ENCODE measurements at regions of chr2 and their contacts with region 1.

Region 1: DNA sequence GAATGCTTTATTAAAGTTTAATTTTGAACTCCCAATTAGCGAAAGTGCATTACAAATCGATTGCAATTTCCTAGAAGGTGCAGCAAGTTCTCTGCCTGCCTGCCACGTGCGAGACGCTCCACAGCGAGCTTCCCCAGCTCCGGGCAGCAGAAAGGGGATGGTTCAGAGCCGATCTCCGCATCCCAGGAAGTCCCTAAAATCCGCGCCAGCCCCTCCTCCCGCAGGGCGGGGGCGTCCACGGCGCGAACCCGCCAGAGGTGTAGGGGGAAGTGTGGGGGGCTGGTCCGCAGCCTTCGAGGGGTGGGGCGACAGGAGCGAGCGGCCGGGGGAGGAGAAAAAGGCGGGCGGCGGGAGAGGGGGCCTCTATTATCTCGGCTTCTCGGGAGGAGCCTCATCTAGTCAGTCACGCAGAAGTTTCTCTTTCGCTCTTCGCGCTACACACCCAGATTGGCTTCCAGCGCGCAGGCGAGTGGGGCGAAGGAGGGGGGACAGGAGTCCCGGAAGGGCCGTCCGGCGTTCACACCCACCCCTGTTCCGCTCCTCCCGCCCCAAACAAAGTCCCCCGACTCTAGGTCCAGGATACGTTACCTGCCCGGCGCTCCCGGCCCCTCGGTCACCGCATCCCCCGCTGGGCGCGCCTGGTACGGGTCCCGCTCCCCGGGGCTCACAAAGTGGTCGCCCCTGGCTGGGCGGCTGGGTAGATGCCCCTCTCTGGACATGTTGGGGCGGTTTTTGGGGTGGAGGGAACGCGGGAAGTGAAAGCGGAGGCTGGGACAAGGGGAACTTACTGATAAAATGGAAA is 9.1 kb upstream of the NR4A2 start:
- DNase-seq: peak; percentile 94
- H3K4me3 Mint-ChIP-seq: peak overlapping the region; percentile 84
- H3K27ac Mint-ChIP-seq: peak overlapping the region; percentile 96
- H3K4me1 Mint-ChIP-seq: peaks cover 50% of the 10 kb centered on the region
- H3K27me3 Mint-ChIP-seq: no peaks in the 10 kb centered on the region

Region 2: GRCh38 chr2:156199588-156199987 is 142.1 kb before region 1 on chr2:
- CTCF ChIA-PET with region 1: no interaction called
- intact Hi-C with region 1: no loop called
- DNase-seq: no peak
- H3K4me3 Mint-ChIP-seq: no peak overlapping the region
- H3K27ac Mint-ChIP-seq: no peak overlapping the region
- H3K4me1 Mint-ChIP-seq: no peaks in the 10 kb centered on the region
- H3K27me3 Mint-ChIP-seq: peaks cover 14% of the 10 kb centered on the region

Region 3: GRCh38 chr2:156322051-156322685 is 19.5 kb before region 1 on chr2:
- CTCF ChIA-PET with region 1: no interaction called
- intact Hi-C with region 1: no loop called
- DNase-seq: peak; percentile 25
- H3K4me3 Mint-ChIP-seq: peak overlapping the region; percentile 65
- H3K27ac Mint-ChIP-seq: no peak overlapping the region
- H3K4me1 Mint-ChIP-seq: peaks cover 39% of the 10 kb centered on the region
- H3K27me3 Mint-ChIP-seq: peaks cover 65% of the 10 kb centered on the region

Region 4: GRCh38 chr2:156400706-156401678 is 59.3 kb after region 1 on chr2:
- CTCF ChIA-PET with region 1: interaction called, 10 read pairs
- intact Hi-C with region 1: loop called (anchors 1 kb)
- DNase-seq: peak; percentile 85
- H3K4me3 Mint-ChIP-seq: peak overlapping the region; percentile 89
- H3K27ac Mint-ChIP-seq: peak overlapping the region; percentile 99
- H3K4me1 Mint-ChIP-seq: peaks cover 34% of the 10 kb centered on the region
- H3K27me3 Mint-ChIP-seq: peaks cover 5% of the 10 kb centered on the region

Region 5: GRCh38 chr2:156476850-156477206 is 135.2 kb after region 1 on chr2:
- CTCF ChIA-PET with region 1: no interaction called
- intact Hi-C with region 1: loop called (anchors 2 kb)
- DNase-seq: peak; percentile 16
- H3K4me3 Mint-ChIP-seq: no peak overlapping the region
- H3K27ac Mint-ChIP-seq: no peak overlapping the region
- H3K4me1 Mint-ChIP-seq: peaks cover 31% of the 10 kb centered on the region
- H3K27me3 Mint-ChIP-seq: no peaks in the 10 kb centered on the region

Region 6: GRCh38 chr2:156538083-156538504 is 196.4 kb after region 1 on chr2:
- CTCF ChIA-PET with region 1: no interaction called
- intact Hi-C with region 1: loop called (anchors 1 kb)
- DNase-seq: no peak
- H3K4me3 Mint-ChIP-seq: no peak overlapping the region
- H3K27ac Mint-ChIP-seq: no peak overlapping the region
- H3K4me1 Mint-ChIP-seq: peaks cover 39% of the 10 kb centered on the region
- H3K27me3 Mint-ChIP-seq: no peaks in the 10 kb centered on the region

Region 7: GRCh38 chr2:157032017-157032416 is 690.4 kb after region 1 on chr2:
- CTCF ChIA-PET with region 1: no interaction called
- intact Hi-C with region 1: no loop called
- DNase-seq: no peak
- H3K4me3 Mint-ChIP-seq: no peak overlapping the region
- H3K27ac Mint-ChIP-seq: no peak overlapping the region
- H3K4me1 Mint-ChIP-seq: no peaks in the 10 kb centered on the region
- H3K27me3 Mint-ChIP-seq: no peaks in the 10 kb centered on the region

Measured in activated naive CD4-positive, alpha-beta T cell treated with anti-CD3 and anti-CD28 coated beads for 36 hours (primary cell).